H1 (cell line): ENCODE measurements at regions of chr14 and their contacts with region 1.

Region 1: GRCh38 chr14:74508292-74508731 is 14.7 kb downstream of the ISCA2 start:
- DNase-seq: no peak
- H3K4me3 ChIP-seq: no peak overlapping the region
- H3K27ac ChIP-seq: no peak overlapping the region
- H3K4me1 ChIP-seq: peaks cover 0 to 19% (median 11%) of the 10 kb centered on the region in 4 experiments; a peak in 5 of 7 replicates
- H3K27me3 ChIP-seq: no peaks in the 10 kb centered on the region; a peak in 1 of 7 replicates
- CTCF ChIP-seq: peak in 2 of 3 experiments; percentile 99 to 100; a peak in 3 of 4 replicates
- EP300 ChIP-seq: no peak
- POLR2A ChIP-seq: no peak
- RAD21 ChIP-seq: peak; percentile 60 to 74

Region 2: GRCh38 chr14:74414403-74415114 is 93.8 kb before region 1 on chr14:
- CTCF ChIA-PET with region 1: no interaction called
- POLR2A ChIA-PET with region 1: no interaction called
- DNase-seq: no peak
- H3K4me3 ChIP-seq: peak overlapping the region in 1 of 4 experiments; percentile 5; a peak in 1 of 8 replicates
- H3K27ac ChIP-seq: no peak overlapping the region
- H3K4me1 ChIP-seq: peaks cover 11 to 31% (median 19%) of the 10 kb centered on the region in 4 experiments
- H3K27me3 ChIP-seq: no peaks in the 10 kb centered on the region
- CTCF ChIP-seq: no peak
- EP300 ChIP-seq: no peak
- POLR2A ChIP-seq: no peak
- RAD21 ChIP-seq: no peak

Region 3: DNA sequence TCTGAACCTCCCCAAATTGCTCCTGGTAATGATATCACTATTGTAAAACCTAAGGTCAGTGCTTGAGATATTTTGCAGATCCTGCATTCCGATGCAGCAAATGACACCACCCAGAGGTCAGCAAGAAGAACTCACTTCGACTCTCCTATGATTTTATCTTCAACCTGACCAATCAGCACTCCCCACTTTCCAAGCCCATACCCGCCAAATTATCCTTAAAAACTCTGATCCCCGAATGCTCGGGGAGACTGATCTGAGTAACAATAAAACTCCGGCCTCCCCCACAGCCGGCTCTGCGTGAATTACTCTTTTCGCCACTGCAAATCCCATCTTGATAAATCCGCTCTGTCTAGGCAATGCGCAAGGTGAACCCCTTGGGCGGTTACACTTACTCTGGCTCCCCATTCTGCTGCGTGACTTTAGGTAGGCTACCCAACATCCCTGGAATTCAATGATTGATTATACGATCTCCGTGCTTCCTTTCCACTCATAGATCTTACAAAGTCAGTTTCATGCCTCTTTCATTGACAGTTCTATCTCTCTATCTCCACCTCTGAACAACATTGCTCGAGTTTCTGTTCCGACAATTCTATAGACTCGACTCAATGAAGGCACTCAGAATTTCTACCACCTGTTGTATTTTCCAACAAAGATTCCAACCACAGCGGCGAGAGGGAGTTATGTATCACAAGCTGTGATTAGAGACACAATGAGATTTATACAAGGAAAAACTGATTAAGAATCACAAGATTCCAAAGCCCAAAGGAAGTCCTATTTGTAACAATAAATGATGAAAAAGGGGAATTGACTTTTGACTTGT is 16.1 kb before region 1 on chr14:
- CTCF ChIA-PET with region 1: interaction called, 64 read pairs
- POLR2A ChIA-PET with region 1: interaction called, 4 read pairs
- DNase-seq: no peak
- H3K4me3 ChIP-seq: peak overlapping the region; percentile 69 to 85 (median 74)
- H3K27ac ChIP-seq: no peak overlapping the region
- H3K4me1 ChIP-seq: peaks cover 0 to 6% (median 2%) of the 10 kb centered on the region in 4 experiments; a peak in 4 of 7 replicates
- H3K27me3 ChIP-seq: no peaks in the 10 kb centered on the region
- CTCF ChIP-seq: peak in 1 of 3 experiments; percentile 30; a peak in 2 of 4 replicates
- EP300 ChIP-seq: no peak
- POLR2A ChIP-seq: no peak
- RAD21 ChIP-seq: peak; percentile 17 to 38; a peak in 2 of 4 replicates

Region 4: DNA sequence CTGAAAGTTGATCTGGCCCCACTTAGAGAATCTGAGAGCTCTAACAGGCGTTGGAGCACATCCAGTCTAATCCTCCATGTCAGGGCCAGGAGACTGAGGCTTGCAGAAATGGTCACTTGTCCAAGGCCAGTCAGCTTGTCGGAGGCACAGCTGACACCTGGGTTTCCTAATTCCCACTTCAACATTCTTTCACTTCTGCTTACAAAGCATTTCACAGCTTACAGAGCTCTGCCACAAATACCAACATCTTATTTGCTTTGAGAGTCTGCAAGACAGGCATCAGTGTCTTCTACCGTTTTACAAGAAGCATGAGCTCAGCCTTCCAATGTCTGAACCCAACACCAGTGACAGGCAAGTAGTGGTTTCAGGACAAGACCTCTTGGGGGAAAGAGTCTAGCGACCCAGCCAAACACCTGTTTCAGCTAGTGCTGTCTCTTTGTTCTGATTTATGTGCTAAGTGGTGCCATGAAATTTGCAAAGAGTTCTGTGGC is 17.1 kb after region 1 on chr14:
- CTCF ChIA-PET with region 1: interaction called, 61 read pairs
- POLR2A ChIA-PET with region 1: no interaction called
- DNase-seq: no peak
- H3K4me3 ChIP-seq: no peak overlapping the region
- H3K27ac ChIP-seq: no peak overlapping the region
- H3K4me1 ChIP-seq: peaks cover 0 to 6% (median 3%) of the 10 kb centered on the region in 4 experiments; a peak in 2 of 7 replicates
- H3K27me3 ChIP-seq: no peaks in the 10 kb centered on the region
- CTCF ChIP-seq: no peak
- EP300 ChIP-seq: no peak
- POLR2A ChIP-seq: no peak
- RAD21 ChIP-seq: no peak

Region 5: DNA sequence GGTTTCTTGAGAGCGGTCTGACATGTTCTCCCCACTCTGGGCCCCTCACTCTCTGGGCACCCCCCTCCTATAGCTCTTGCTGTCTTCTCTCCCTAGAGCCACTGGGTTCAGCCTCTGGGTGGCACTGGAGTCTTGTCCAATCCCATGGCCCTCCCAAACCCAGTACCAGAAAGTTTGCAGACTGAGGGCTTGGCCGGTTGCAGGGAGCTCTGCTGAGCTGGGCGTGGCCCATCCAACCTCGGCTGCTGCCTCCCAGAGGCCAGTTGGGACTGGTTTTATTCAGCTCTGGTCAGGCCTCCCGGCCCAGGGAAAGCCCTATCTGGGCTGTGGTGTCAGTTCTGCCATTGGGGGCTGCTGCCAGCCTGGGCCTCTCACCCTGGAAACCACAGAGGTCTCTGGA is 23.2 kb after region 1 on chr14:
- CTCF ChIA-PET with region 1: interaction called, 61 read pairs
- POLR2A ChIA-PET with region 1: no interaction called
- DNase-seq: peak; percentile 23 to 72
- H3K4me3 ChIP-seq: no peak overlapping the region
- H3K27ac ChIP-seq: no peak overlapping the region
- H3K4me1 ChIP-seq: no peaks in the 10 kb centered on the region; a peak in 2 of 7 replicates
- H3K27me3 ChIP-seq: no peaks in the 10 kb centered on the region
- CTCF ChIP-seq: peak; percentile 22 to 60 (median 50)
- EP300 ChIP-seq: no peak
- POLR2A ChIP-seq: no peak
- RAD21 ChIP-seq: peak; percentile 63 to 81

Region 6: GRCh38 chr14:74552623-74553022 is 44.3 kb after region 1 on chr14:
- CTCF ChIA-PET with region 1: interaction called, 13 read pairs
- POLR2A ChIA-PET with region 1: no interaction called
- DNase-seq: no peak
- H3K4me3 ChIP-seq: no peak overlapping the region
- H3K27ac ChIP-seq: no peak overlapping the region
- H3K4me1 ChIP-seq: peaks cover 0 to 13% (median 6%) of the 10 kb centered on the region in 4 experiments; a peak in 6 of 7 replicates
- H3K27me3 ChIP-seq: no peaks in the 10 kb centered on the region
- CTCF ChIP-seq: no peak
- EP300 ChIP-seq: no peak
- POLR2A ChIP-seq: no peak
- RAD21 ChIP-seq: no peak